Endothelial cell of umbilical vein (primary cell): ENCODE measurements at regions of chr21 and their contacts with region 1.

Region 1: GRCh38 chr21:44958471-44959191 is 18.8 kb downstream of the SLX9 start:
- DNase-seq: peak; percentile 95
- H3K4me3 ChIP-seq: no peak overlapping the region
- H3K27ac ChIP-seq: peak overlapping the region; percentile 61
- H3K4me1 ChIP-seq: peaks cover 40% of the 10 kb centered on the region
- H3K27me3 ChIP-seq: no peaks in the 10 kb centered on the region
- CTCF ChIP-seq: no peak
- POLR2A ChIP-seq: no peak

Region 2: DNA sequence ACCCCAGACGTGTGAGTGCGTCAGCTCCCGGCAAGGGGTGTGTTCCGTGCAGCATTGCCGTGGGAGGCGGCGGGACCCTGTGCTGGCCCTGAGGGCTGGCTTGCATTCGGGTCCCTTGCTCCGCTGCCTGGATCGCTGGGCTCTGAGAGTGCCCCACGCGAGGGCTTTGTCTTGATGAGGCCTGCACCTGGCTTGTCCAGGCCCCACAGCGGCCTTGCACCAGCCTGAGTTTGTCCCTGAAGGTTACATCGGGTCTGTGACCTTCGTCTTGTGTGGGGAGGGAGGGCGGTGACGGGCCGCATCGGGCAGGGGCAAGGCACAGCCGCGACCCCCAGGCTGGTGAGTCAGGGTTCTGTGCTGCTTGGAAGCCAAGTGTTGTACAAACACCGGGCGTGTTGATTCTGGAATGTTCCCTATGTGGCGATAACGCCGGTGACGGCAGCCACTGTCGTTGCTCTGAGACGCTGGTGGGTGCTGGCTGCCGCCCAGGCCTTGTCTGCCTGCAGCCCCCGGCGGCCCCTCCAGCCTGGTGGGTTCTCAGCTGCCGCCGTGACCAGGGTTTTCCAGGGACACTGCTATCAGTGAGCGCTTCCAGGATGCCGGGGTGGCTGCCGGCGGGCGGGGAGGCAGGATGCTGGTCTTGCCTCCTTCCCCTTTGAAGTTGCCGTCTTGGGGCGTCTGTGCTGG is 24.1 kb after region 1 on chr21:
- CTCF ChIA-PET with region 1: interaction called, 8 read pairs
- POLR2A ChIA-PET with region 1: no interaction called
- dilution Hi-C with region 1: no loop called
- intact Hi-C with region 1: loop called (anchors 2 kb)
- DNase-seq: peak; percentile 74
- H3K4me3 ChIP-seq: no peak overlapping the region
- H3K27ac ChIP-seq: peak overlapping the region; percentile 51
- H3K4me1 ChIP-seq: peaks cover 12% of the 10 kb centered on the region
- H3K27me3 ChIP-seq: no peaks in the 10 kb centered on the region
- CTCF ChIP-seq: no peak
- POLR2A ChIP-seq: no peak

Region 3: GRCh38 chr21:45000977-45001728 is 42.5 kb after region 1 on chr21:
- CTCF ChIA-PET with region 1: no interaction called
- POLR2A ChIA-PET with region 1: interaction called, 3 read pairs
- dilution Hi-C with region 1: no loop called
- intact Hi-C with region 1: loop called (anchors 2 kb)
- DNase-seq: peak; percentile 76
- H3K4me3 ChIP-seq: no peak overlapping the region
- H3K27ac ChIP-seq: no peak overlapping the region
- H3K4me1 ChIP-seq: peaks cover 17% of the 10 kb centered on the region
- H3K27me3 ChIP-seq: no peaks in the 10 kb centered on the region
- CTCF ChIP-seq: no peak
- POLR2A ChIP-seq: no peak

Region 4: DNA sequence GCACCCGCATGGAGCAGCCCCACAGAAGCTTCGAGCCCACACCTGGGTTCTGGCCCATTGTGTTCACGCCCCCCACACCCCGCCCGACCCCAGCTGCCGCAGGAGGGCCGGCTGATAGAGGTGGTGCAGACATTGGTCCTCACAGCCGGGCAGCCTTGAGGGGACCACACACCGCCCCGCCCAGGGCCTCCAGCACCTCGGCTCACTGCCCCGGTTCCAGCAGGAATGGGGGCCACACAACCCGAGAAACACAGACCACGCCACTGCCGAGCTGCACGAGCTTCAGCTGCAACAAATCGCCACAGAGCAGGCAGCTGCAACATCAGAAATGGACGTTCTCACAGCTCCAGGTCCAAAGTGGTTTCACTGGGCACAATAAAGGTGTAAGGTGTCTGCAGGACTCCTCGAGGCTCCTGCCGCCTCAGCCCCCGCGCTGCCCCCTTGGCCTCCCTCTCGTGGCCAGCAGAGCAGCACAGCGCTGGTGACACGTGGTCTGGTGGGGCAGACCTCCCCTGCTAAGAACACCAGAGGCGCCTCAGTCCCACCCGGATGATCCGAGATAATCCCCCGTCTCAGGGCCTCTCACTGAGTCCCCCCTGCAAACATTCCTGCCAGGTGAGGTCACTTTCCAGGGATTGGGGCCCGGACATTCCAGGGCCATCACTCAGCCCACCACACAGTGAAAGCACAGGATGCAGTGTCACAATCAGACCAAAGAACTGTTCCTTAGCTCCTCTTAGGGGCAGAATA is 53.5 kb after region 1 on chr21:
- CTCF ChIA-PET with region 1: interaction called, 5 read pairs
- POLR2A ChIA-PET with region 1: no interaction called
- dilution Hi-C with region 1: no loop called
- intact Hi-C with region 1: loop called (anchors 1 kb)
- DNase-seq: peak; percentile 78
- H3K4me3 ChIP-seq: no peak overlapping the region
- H3K27ac ChIP-seq: peak overlapping the region; percentile 77
- H3K4me1 ChIP-seq: peaks cover 22% of the 10 kb centered on the region
- H3K27me3 ChIP-seq: no peaks in the 10 kb centered on the region
- CTCF ChIP-seq: peak; percentile 28 to 50
- POLR2A ChIP-seq: no peak

Region 5: DNA sequence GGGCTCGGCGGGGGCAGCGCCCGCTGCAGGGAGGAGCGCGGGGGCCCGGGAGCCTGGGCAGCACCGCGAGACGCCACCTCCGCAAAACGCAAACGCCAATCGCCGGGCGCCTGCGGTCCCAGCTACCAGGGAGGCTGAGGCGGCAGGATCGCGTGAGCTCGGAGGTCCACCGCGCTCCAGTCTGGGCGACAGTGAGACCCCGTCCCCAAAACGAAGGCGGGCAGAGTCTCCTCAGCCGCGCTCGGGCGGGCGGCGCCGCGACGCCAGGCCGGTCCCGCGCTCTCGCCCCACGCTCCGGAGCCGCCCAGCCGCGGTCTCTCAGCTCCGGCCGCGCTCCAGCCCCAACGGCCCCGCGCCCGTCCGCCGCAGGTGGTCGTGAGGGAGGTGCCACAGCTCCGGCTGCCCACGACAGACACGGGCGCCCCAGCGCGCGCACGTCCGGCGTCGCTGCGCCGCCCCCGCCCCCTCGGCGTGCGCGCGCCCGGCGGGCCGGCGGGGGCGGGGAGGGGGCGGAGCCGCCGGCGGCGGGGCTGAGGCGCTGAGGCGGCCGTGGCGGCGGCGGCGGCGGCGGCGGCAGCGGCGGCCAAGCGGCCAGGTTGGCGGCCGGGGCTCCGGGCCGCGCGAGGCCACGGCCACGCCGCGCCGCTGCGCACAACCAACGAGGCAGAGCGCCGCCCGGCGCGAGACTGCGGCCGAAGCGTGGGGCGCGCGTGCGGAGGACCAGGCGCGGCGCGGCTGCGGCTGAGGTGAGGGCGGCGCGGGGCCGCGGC is 115.6 kb after region 1 on chr21 and contains the start of gene ADARB1:
- CTCF ChIA-PET with region 1: no interaction called
- POLR2A ChIA-PET with region 1: no interaction called
- dilution Hi-C with region 1: no loop called
- intact Hi-C with region 1: loop called (anchors 1 kb)
- DNase-seq: peak; percentile 29
- H3K4me3 ChIP-seq: peak within 1 kb of the TSS; percentile 68 to 81 (median 73)
- H3K27ac ChIP-seq: peak within 1 kb of the TSS; percentile 75
- H3K4me1 ChIP-seq: peaks cover 16% of the 10 kb centered on the region
- H3K27me3 ChIP-seq: no peaks in the 10 kb centered on the region
- CTCF ChIP-seq: no peak
- POLR2A ChIP-seq: peak; percentile 79
- total RNA-seq, gene ADARB1: 54.3 and 55.5 TPM in 2 replicates

Region 6: DNA sequence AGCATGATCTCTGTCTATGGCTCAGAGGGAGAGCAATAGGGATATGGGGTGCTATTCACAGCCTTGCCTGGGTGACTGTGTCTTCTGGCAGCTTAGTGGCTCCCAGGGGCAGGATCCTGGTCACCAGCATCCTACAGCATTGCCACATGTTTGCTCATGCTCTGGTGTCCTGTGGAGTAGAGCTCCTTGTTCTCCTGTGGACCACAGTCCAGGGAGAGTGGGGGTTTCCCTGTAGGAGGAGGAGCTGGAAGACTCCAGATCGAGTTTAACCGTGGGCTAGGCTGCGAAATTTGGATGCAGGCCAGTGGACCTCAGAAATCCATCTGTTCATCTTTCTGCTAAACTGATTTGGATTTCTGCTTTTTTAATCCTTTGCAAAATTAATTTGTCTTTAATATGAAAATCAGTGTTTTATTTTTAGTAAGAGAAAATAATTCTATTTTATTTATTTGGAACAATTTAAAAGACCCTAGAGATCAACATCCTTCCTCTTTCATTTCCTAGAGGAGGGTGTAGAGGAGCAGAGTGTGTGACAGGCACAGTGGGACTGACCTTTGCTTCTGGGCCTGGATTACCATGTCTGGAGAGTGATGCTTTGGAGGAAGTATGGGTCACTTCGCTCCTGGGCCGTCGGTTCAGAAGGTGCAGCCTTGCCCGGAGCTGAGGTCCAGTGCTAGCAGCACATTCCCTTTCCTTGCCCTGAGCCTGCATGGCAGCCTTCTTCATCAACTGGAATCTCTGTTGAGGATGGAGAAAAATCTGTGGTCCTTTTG is 133.1 kb after region 1 on chr21:
- CTCF ChIA-PET with region 1: no interaction called
- POLR2A ChIA-PET with region 1: no interaction called
- dilution Hi-C with region 1: no loop called
- intact Hi-C with region 1: loop called (anchors 2 kb)
- DNase-seq: no peak
- H3K4me3 ChIP-seq: no peak overlapping the region
- H3K27ac ChIP-seq: no peak overlapping the region
- H3K4me1 ChIP-seq: peaks cover 55% of the 10 kb centered on the region
- H3K27me3 ChIP-seq: no peaks in the 10 kb centered on the region
- CTCF ChIP-seq: no peak
- POLR2A ChIP-seq: no peak

Region 7: GRCh38 chr21:45098867-45099266 is 140.2 kb after region 1 on chr21:
- CTCF ChIA-PET with region 1: interaction called, 6 read pairs
- POLR2A ChIA-PET with region 1: interaction called, 4 read pairs
- dilution Hi-C with region 1: no loop called
- intact Hi-C with region 1: loop called (anchors 2 kb)
- DNase-seq: peak; percentile 46
- H3K4me3 ChIP-seq: no peak overlapping the region
- H3K27ac ChIP-seq: no peak overlapping the region
- H3K4me1 ChIP-seq: peaks cover 65% of the 10 kb centered on the region
- H3K27me3 ChIP-seq: no peaks in the 10 kb centered on the region
- CTCF ChIP-seq: peak; percentile 36 to 53
- POLR2A ChIP-seq: no peak